Cardiac septum (tissue), 1 donor: ENCODE measurements at regions of chr15 and their contacts with region 1.

Region 1: DNA sequence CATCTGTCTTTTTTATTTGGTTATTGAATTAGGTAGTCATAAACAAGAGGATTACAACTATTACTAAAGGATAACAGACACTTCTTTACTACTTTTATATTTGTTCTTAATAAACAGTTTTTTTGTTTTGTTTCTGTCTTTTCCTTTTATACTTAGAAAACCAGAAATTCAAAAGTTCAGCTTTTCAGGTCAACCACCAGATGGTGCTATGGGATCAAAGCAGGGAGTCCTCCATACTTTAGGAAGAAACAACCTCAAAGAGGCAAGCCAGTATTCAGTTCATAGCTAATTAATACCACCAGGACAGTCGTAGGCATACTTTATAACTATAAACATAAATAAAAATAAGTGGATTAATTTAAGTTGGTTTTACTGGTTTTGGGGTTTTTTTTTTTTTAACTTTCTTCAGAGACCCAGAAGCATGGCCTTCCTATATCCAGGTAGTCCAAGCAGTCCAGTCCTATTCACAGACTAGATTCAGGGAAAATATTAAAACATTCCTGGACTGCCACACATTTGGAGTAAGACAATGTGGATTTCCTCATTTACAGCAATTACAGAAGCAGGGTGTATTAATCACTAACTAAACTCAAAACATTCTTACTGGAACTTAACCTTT is 16.0 kb upstream of the EID1 start:
- DNase-seq: no peak

Region 2: GRCh38 chr15:49046220-49047102 is 184.5 kb after region 1 on chr15 and contains the start of gene SECISBP2L:
- intact Hi-C with region 1: no loop called
- DNase-seq: peak; percentile 97
- total RNA-seq, gene SECISBP2L: 40.9 TPM

Region 3: DNA sequence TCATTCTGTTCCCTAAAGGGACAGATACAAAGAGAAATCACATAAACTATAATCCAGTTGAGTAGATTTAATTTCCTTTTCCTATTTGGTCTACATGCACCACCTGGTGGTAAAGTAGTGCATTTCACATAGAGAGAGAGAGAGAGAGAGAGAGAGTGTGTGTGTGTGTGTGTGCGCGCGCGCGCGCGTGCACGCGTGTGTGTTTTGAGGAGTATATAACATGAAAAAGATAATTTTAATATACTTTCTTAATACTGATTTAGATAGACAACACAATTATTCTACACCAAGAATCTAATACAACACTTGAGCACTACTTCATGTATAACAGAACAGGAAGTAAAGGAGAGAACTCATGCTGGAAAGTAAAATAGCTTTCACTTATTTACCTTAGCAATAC is 560.1 kb after region 1 on chr15:
- intact Hi-C with region 1: loop called (anchors 5 kb)
- DNase-seq: no peak